ENCODE measurements at regions of chr1 and their contacts with region 1.

Region 1: GRCh38 chr1:206663832-206664652 is 20.7 kb upstream of the MAPKAPK2 start:
- DNase-seq: peak; percentile 84
- ATAC-seq: peak; percentile 92
- H3K4me3 Mint-ChIP-seq: no peak overlapping the region
- H3K27ac Mint-ChIP-seq: no peak overlapping the region
- H3K4me1 Mint-ChIP-seq: peaks cover 22% of the 10 kb centered on the region
- H3K27me3 Mint-ChIP-seq: peaks cover 37% of the 10 kb centered on the region

Region 2: DNA sequence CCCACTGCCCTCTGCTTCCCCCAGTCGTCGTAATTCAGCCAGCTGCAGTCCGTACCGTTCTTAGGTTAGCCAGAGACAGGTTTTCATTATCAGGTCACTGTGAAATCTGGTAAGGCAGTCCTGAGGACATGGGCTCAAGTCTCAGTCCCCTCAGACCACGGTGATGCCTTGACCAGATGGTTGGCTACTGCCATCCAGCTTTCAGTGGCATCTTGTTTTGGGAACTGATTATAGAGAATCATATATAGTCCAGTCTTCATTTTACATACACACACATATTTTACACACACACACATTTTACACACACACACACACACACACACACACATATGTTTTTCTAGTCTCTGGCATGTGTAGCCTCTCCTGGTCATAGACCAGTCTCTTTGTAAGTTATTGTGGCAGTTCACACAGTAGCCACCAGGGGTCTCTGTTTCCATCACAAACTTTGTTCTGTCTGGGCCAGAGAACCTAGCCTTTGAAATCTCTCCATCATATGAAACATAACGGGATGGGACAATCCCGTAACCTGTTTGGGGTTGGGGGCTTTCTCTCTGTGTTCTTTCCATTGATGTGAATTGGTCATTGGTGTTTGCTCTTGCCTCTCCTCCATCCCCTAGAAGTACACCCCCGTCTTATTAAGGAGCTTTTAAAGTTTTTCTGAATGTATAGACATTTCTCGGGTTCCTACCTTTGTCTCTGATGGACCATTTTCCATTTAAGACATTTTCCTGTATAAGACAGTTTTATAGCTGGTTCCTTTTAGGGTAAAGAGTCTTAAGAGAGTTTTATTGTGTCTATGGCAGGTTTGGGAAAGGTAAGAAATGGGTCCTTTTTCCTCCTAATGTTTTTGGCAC is 202.2 kb before region 1 on chr1:
- CTCF ChIA-PET with region 1: interaction called, 24 read pairs
- POLR2A ChIA-PET with region 1: no interaction called
- DNase-seq: peak; percentile 88
- ATAC-seq: peak; percentile 73
- H3K4me3 Mint-ChIP-seq: no peak overlapping the region
- H3K27ac Mint-ChIP-seq: no peak overlapping the region
- H3K4me1 Mint-ChIP-seq: peaks cover 43% of the 10 kb centered on the region
- H3K27me3 Mint-ChIP-seq: no peaks in the 10 kb centered on the region

Region 3: GRCh38 chr1:206521694-206522402 is 142.2 kb before region 1 on chr1:
- CTCF ChIA-PET with region 1: interaction called, 13 read pairs
- POLR2A ChIA-PET with region 1: no interaction called
- DNase-seq: no peak
- ATAC-seq: peak; percentile 29
- H3K4me3 Mint-ChIP-seq: no peak overlapping the region
- H3K27ac Mint-ChIP-seq: no peak overlapping the region
- H3K4me1 Mint-ChIP-seq: peaks cover 4% of the 10 kb centered on the region
- H3K27me3 Mint-ChIP-seq: no peaks in the 10 kb centered on the region

Region 4: DNA sequence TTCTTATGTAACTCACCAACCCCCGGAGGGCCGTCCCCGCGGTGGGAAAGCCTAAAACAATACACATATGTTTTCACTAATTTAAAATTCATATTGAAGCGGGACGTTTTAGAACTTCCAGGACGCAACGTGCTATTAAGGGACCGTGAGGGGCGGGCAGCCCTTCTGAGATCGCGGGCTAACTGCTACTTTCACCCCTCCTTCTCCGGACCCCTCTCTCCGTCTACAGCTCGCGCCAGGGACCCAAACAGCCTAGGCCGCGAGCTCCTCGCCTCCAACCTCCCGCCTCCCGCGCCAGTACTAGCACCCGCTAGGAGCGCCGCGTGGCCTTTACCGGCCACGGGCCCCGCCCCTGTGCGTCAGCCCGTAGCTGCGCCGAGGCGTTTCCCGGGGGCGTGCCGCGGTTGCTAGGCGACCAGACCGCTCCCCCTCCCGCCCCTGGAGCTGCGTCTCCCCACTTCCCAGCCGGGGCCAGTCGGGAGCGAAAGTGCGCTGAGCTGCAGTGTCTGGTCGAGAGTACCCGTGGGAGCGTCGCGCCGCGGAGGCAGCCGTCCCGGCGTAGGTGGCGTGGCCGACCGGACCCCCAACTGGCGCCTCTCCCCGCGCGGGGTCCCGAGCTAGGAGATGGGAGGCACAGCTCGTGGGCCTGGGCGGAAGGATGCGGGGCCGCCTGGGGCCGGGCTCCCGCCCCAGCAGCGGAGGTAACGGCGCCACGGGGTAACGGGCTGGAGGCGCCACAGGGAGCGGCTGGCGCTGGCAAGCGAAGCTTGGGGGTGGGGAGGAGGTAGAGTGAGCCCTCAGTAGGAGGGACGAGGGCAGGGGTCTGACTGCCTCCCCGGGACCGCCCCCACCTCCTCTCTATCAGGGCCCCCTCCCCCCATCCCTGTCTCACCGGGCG is 28.7 kb before region 1 on chr1 and contains the start of gene DYRK3:
- CTCF ChIA-PET with region 1: interaction called, 647 read pairs
- POLR2A ChIA-PET with region 1: interaction called, 8 read pairs
- DNase-seq: peak; percentile 95
- ATAC-seq: peak; percentile 95
- H3K4me3 Mint-ChIP-seq: peak within 1 kb of the TSS; percentile 80
- H3K27ac Mint-ChIP-seq: peak within 1 kb of the TSS; percentile 83
- H3K4me1 Mint-ChIP-seq: peaks cover 27% of the 10 kb centered on the region
- H3K27me3 Mint-ChIP-seq: peaks cover 17% of the 10 kb centered on the region
- total RNA-seq, gene DYRK3: 5.3 to 5.9 TPM

Region 5: GRCh38 chr1:206684478-206685333 is 20.7 kb after region 1 on chr1 and contains the start of gene MAPKAPK2:
- CTCF ChIA-PET with region 1: interaction called, 31 read pairs
- POLR2A ChIA-PET with region 1: interaction called, 3 read pairs
- DNase-seq: peak; percentile 81
- ATAC-seq: peak; percentile 70
- H3K4me3 Mint-ChIP-seq: peak within 1 kb of the TSS; percentile 99
- H3K27ac Mint-ChIP-seq: peak within 1 kb of the TSS; percentile 95
- H3K4me1 Mint-ChIP-seq: peaks cover 41% of the 10 kb centered on the region
- H3K27me3 Mint-ChIP-seq: peaks cover 20% of the 10 kb centered on the region
- total RNA-seq, gene MAPKAPK2: 59.0 to 61.3 TPM

Region 6: GRCh38 chr1:206716870-206717673 is 53.0 kb after region 1 on chr1:
- CTCF ChIA-PET with region 1: interaction called, 17 read pairs
- POLR2A ChIA-PET with region 1: no interaction called
- DNase-seq: peak; percentile 52
- ATAC-seq: peak; percentile 67
- H3K4me3 Mint-ChIP-seq: peak overlapping the region; percentile 26
- H3K27ac Mint-ChIP-seq: peak overlapping the region; percentile 75
- H3K4me1 Mint-ChIP-seq: peaks cover 69% of the 10 kb centered on the region
- H3K27me3 Mint-ChIP-seq: no peaks in the 10 kb centered on the region

Region 7: DNA sequence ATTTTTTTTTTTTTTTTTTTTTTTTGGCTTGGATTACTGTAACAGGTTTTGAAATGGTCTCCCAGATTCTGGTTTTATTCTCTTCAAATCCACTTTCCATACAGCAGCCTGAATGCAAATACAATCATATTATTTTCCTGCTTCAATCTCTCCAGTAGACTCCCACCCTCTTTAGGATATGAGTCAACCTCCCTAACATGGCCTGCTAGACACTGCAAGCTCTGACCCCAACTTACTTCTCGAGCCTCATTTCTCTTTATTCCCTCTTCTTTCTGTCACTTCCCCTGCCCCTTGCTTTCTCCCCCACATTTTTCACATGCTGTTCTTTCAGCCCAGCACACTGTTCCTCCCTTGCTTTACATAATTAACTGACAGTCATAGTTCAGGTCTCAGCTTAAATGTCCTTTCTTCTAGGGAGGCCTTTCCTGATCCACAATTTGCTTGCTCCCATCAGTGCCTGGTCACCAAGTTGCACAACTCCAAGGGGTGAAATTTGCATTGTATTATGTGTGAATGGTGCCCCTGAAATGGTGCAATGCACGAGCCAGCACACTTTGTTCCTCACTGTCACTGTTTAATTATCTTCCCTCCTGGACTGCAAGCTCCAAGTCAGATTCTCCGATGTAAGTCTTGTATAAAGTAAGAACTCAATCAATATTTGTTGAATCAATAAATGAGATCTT is 84.4 kb after region 1 on chr1:
- CTCF ChIA-PET with region 1: no interaction called
- POLR2A ChIA-PET with region 1: no interaction called
- DNase-seq: no peak
- ATAC-seq: no peak
- H3K4me3 Mint-ChIP-seq: no peak overlapping the region
- H3K27ac Mint-ChIP-seq: no peak overlapping the region
- H3K4me1 Mint-ChIP-seq: peaks cover 20% of the 10 kb centered on the region
- H3K27me3 Mint-ChIP-seq: peaks cover 24% of the 10 kb centered on the region

Region 8: DNA sequence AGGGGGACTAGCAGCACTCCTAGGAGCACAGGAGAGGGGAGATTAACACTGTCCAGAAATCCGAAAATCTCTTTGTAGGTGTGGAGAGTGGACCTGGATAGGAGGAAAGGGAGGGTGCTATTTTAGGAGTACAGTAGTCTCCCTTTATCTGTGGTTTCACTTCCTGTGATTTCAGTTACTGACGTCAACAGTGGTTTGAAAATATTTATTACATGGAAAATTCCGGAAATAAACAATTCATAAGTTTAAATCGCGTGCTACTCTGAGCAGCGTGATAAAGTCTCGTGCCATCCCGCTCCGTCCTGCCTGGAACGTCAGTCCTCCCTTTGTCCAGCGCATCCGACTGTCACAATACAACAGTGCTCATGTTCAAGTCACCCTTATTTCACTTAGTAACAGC is 226.6 kb after region 1 on chr1:
- CTCF ChIA-PET with region 1: no interaction called
- POLR2A ChIA-PET with region 1: no interaction called
- DNase-seq: no peak
- ATAC-seq: no peak
- H3K4me3 Mint-ChIP-seq: no peak overlapping the region
- H3K27ac Mint-ChIP-seq: peak overlapping the region; percentile 45
- H3K4me1 Mint-ChIP-seq: peaks cover 24% of the 10 kb centered on the region
- H3K27me3 Mint-ChIP-seq: peaks cover 12% of the 10 kb centered on the region

Region 9: DNA sequence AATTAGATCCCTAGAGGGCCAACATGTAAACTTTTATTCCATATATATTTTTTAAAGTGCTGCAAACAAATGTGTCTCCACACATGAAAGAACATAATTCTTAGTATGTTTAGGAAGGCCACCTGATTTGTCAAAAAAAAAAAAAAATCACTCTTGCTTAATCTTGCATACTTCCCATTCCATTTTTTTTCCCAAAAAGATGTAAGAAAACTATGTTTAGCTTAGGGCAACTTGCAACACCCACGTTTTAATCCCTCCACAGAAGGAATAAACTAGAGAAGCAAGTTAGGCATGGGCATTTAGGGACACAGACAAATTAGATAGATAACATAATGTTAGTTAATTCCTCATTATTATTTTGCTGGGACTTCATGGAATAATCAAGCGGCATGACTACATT is 381.4 kb after region 1 on chr1:
- CTCF ChIA-PET with region 1: no interaction called
- POLR2A ChIA-PET with region 1: no interaction called
- DNase-seq: no peak
- ATAC-seq: no peak
- H3K4me3 Mint-ChIP-seq: no peak overlapping the region
- H3K27ac Mint-ChIP-seq: no peak overlapping the region
- H3K4me1 Mint-ChIP-seq: peaks cover 28% of the 10 kb centered on the region
- H3K27me3 Mint-ChIP-seq: no peaks in the 10 kb centered on the region